ENCODE measurements at regions of chr4 and their contacts with region 1.

Region 1: GRCh38 chr4:7050481-7051143 is 7.4 kb downstream of the TADA2B start:
- DNase-seq: no peak
- ATAC-seq: no peak
- H3K4me3 ChIP-seq: no peak overlapping the region
- H3K27ac ChIP-seq: no peak overlapping the region
- H3K4me1 ChIP-seq: peaks cover 11% of the 10 kb centered on the region
- H3K27me3 ChIP-seq: no peaks in the 10 kb centered on the region
- CTCF ChIP-seq: no peak

Region 2: DNA sequence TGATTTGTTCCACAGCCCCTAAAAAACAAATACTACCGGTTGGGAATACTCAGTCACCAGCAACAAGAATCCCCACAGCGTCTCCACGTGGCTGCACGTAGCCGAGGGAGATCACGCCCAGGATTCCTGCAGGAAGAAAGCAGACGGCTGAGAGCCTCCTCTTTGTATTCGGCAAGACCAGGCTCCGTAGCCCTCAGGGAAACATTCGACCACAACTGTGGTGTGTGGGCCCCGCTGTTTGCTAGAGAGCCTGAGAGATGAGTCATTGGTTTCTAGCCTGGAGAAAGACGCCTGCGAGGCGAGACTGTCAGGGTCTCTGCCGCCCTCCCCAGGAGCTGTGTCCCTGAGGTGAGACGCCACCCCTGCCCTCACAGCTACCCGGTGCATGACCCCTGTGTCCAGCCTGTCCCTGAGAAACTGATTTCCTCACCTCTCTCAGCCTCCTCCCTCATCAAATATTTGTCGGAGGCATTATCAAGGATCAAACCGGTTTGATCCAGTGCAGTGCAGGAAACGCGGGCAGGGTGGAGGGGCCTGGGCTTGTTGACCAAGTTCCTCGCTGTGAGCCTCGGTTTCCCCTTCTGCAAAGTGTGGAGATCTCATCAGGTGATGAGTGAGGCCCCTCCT is 361.6 kb before region 1 on chr4:
- CTCF ChIA-PET with region 1: no interaction called
- POLR2A ChIA-PET with region 1: no interaction called
- in situ Hi-C with region 1: no loop called
- intact Hi-C with region 1: no loop called
- DNase-seq: no peak
- ATAC-seq: peak; percentile 92
- H3K4me3 ChIP-seq: peak overlapping the region in 1 of 2 experiments; percentile 8; a peak in 1 of 4 replicates
- H3K27ac ChIP-seq: peak overlapping the region; percentile 78
- H3K4me1 ChIP-seq: peaks cover 36% of the 10 kb centered on the region
- H3K27me3 ChIP-seq: no peaks in the 10 kb centered on the region
- CTCF ChIP-seq: peak; percentile 13; the same call in 1 of the 2 replicates

Region 3: GRCh38 chr4:7009564-7009963 is 41.0 kb before region 1 on chr4:
- CTCF ChIA-PET with region 1: interaction called, 10 read pairs
- POLR2A ChIA-PET with region 1: no interaction called
- in situ Hi-C with region 1: no loop called
- intact Hi-C with region 1: no loop called
- DNase-seq: no peak
- ATAC-seq: no peak
- H3K4me3 ChIP-seq: no peak overlapping the region
- H3K27ac ChIP-seq: no peak overlapping the region
- H3K4me1 ChIP-seq: no peaks in the 10 kb centered on the region
- H3K27me3 ChIP-seq: no peaks in the 10 kb centered on the region
- CTCF ChIP-seq: no peak

Region 4: GRCh38 chr4:7710576-7711306 is 660.1 kb after region 1 on chr4:
- CTCF ChIA-PET with region 1: no interaction called
- POLR2A ChIA-PET with region 1: interaction called, 10 read pairs
- in situ Hi-C with region 1: no loop called
- intact Hi-C with region 1: no loop called
- DNase-seq: no peak
- ATAC-seq: no peak
- H3K4me3 ChIP-seq: no peak overlapping the region
- H3K27ac ChIP-seq: no peak overlapping the region
- H3K4me1 ChIP-seq: no peaks in the 10 kb centered on the region
- H3K27me3 ChIP-seq: no peaks in the 10 kb centered on the region
- CTCF ChIP-seq: no peak

Measured in Panc1 (cell line).